ENCODE measurements at regions of chr1 and their contacts with region 1.

Region 1: GRCh38 chr1:188782219-188782841 is 1695.3 kb downstream of the BRINP3 start:
- DNase-seq: peak; percentile 24
- ATAC-seq: peak; percentile 100
- H3K4me3 Mint-ChIP-seq: no peak overlapping the region
- H3K27ac Mint-ChIP-seq: no peak overlapping the region
- H3K4me1 Mint-ChIP-seq: no peaks in the 10 kb centered on the region
- H3K27me3 Mint-ChIP-seq: no peaks in the 10 kb centered on the region
- CTCF ChIP-seq: peak; percentile 43; the same call in 1 of the 2 replicates

Region 2: DNA sequence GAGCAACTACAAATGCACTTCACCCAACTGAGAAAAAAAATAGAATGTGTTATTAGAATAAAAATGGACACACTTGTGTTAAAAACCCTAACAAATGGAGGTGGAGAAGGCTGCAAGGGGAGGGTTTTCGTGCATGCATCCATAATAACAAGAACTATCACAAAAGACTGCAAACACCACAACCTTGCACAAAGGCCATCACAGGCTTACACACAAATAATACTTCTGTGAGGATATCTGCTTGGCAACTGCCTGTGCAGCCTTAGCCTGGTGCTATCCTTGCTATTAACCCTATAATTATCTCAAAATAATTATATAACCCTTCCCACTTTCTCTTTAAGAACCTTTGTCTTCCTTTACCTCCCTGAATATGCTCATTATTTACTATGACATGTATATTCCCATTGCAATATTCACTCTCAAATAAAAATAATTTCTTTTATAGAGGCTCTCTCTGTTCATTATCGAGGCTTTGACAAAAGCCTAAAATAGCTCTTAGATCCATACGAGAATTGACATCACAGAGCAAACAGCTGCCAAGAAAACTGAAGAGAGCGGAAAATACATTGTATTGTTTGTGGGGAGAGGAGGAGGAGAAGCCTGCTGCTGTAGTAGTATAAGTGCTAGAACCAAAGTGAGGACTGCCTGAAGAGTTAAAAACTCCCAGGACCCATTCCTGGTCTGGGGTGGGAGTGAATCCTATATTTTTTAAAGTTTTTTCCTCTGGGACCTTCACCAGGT is 73.4 kb before region 1 on chr1:
- CTCF ChIA-PET with region 1: no interaction called
- POLR2A ChIA-PET with region 1: no interaction called
- DNase-seq: no peak
- ATAC-seq: no peak
- H3K4me3 Mint-ChIP-seq: no peak overlapping the region
- H3K27ac Mint-ChIP-seq: no peak overlapping the region
- H3K4me1 Mint-ChIP-seq: no peaks in the 10 kb centered on the region
- H3K27me3 Mint-ChIP-seq: no peaks in the 10 kb centered on the region
- CTCF ChIP-seq: no peak

Region 3: DNA sequence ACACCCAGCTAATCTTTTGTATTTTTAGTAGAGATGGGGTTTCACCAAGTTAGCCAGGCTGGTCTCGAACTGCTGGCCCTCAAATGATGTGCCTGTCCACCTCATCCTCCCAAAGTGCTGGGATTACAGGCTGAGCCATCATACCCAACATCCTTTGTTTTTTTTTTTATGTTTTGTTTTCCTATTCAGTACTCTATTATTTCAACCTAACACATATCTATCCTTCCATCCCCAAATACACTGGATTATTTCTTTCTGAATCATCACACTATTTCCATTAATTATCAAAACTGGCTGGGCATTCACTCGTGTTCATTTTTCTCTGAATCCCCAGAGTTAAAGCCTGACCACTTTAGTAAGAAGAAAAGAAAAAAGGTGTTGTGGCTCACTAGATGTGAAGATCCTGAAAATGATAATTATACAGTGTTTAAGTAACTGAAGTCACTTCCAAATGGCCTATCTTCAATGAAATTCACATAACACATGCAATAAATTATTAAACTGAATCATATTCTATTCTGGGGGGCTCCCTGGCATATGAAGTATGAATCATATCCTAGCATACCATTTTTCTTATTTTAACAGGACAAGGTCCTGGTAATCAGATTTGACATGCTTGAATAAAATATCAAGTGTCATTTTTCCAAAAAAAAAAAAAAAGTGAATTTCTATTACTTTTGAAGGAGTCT is 58.9 kb before region 1 on chr1:
- CTCF ChIA-PET with region 1: no interaction called
- POLR2A ChIA-PET with region 1: no interaction called
- DNase-seq: no peak
- ATAC-seq: no peak
- H3K4me3 Mint-ChIP-seq: no peak overlapping the region
- H3K27ac Mint-ChIP-seq: no peak overlapping the region
- H3K4me1 Mint-ChIP-seq: no peaks in the 10 kb centered on the region
- H3K27me3 Mint-ChIP-seq: no peaks in the 10 kb centered on the region
- CTCF ChIP-seq: no peak

Region 4: GRCh38 chr1:188769181-188769580 is 13.1 kb before region 1 on chr1:
- CTCF ChIA-PET with region 1: interaction called, 14 read pairs
- POLR2A ChIA-PET with region 1: no interaction called
- DNase-seq: peak; percentile 61
- ATAC-seq: peak; percentile 94
- H3K4me3 Mint-ChIP-seq: no peak overlapping the region
- H3K27ac Mint-ChIP-seq: no peak overlapping the region
- H3K4me1 Mint-ChIP-seq: peaks cover 23% of the 10 kb centered on the region
- H3K27me3 Mint-ChIP-seq: no peaks in the 10 kb centered on the region
- CTCF ChIP-seq: no peak

Region 5: GRCh38 chr1:188794969-188795368 is 12.6 kb after region 1 on chr1:
- CTCF ChIA-PET with region 1: interaction called, 13 read pairs
- POLR2A ChIA-PET with region 1: no interaction called
- DNase-seq: no peak
- ATAC-seq: no peak
- H3K4me3 Mint-ChIP-seq: no peak overlapping the region
- H3K27ac Mint-ChIP-seq: no peak overlapping the region
- H3K4me1 Mint-ChIP-seq: no peaks in the 10 kb centered on the region
- H3K27me3 Mint-ChIP-seq: no peaks in the 10 kb centered on the region
- CTCF ChIP-seq: no peak

Region 6: GRCh38 chr1:188888387-188888786 is 106.1 kb after region 1 on chr1:
- CTCF ChIA-PET with region 1: no interaction called
- POLR2A ChIA-PET with region 1: no interaction called
- DNase-seq: no peak
- ATAC-seq: no peak
- H3K4me3 Mint-ChIP-seq: no peak overlapping the region
- H3K27ac Mint-ChIP-seq: no peak overlapping the region
- H3K4me1 Mint-ChIP-seq: no peaks in the 10 kb centered on the region
- H3K27me3 Mint-ChIP-seq: no peaks in the 10 kb centered on the region
- CTCF ChIP-seq: no peak

Region 7: DNA sequence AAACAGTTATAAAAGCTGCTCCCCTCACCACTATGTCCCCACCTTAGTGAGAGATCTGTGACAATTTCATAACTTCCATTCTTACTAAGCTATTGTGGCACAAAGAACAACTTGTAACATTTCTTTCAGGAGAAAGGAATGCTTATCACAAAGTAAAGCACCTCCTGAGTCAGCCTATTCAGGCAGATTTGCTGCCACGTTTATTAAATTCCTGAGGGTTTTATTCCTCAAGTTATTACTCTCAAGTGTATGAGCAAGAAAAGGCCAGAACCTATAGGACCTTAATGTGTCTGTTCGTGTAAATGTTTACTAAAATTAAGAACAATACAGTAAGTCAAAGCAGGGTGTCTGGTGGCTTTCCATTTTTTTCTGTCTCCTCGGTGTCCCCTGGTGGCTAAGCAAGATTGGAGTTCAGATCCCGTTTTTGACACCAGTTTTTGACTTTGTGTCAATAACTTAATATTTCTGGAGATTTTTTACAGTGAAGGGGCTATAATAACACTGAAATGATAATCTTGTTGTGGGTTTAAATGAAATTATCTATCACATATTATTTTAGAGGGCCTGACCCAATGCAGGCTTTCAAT is 155.7 kb after region 1 on chr1:
- CTCF ChIA-PET with region 1: interaction called, 11 read pairs
- POLR2A ChIA-PET with region 1: no interaction called
- DNase-seq: no peak
- ATAC-seq: 0 out of 2 replicates have a peak, but pooled peaks have one; percentile 46
- H3K4me3 Mint-ChIP-seq: no peak overlapping the region
- H3K27ac Mint-ChIP-seq: no peak overlapping the region
- H3K4me1 Mint-ChIP-seq: peaks cover 10% of the 10 kb centered on the region
- H3K27me3 Mint-ChIP-seq: no peaks in the 10 kb centered on the region
- CTCF ChIP-seq: no peak

Region 8: GRCh38 chr1:189149547-189150375 is 367.4 kb after region 1 on chr1:
- CTCF ChIA-PET with region 1: interaction called, 16 read pairs
- POLR2A ChIA-PET with region 1: no interaction called
- DNase-seq: peak; percentile 60
- ATAC-seq: peak; percentile 99
- H3K4me3 Mint-ChIP-seq: peak overlapping the region; percentile 47
- H3K27ac Mint-ChIP-seq: no peak overlapping the region
- H3K4me1 Mint-ChIP-seq: no peaks in the 10 kb centered on the region
- H3K27me3 Mint-ChIP-seq: no peaks in the 10 kb centered on the region
- CTCF ChIP-seq: 0 out of 2 replicates have a peak, but pooled peaks have one; percentile 19